ENCODE measurements at regions of chr6 and their contacts with region 1.

Region 1: DNA sequence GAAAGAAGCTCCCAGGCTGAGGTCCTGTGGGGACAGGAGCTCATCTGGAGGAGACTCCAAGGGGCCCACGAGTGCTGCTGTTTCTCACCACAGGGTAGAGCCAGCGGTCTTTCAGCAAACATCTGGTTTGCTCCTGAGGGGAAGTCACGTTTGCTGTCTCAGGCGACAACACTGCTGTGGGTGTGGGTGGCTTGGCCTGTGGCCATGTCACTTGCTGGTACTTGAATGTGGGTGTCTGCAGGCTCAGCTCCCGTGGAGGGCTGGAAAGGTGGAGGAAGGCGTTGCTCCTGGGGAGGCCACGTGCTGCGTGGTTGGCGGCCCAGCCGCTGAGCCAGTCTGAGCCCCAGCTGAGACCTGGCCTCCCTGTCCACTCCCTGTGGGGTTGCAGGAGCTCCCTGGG is 52.8 kb upstream of the MPC1 start:
- DNase-seq: peak; percentile 88 to 98 (median 97)
- H3K4me3 ChIP-seq: peak overlapping the region in 3 of 7 experiments; percentile 17 to 19 (median 19)
- H3K27ac ChIP-seq: no peak overlapping the region
- H3K4me1 ChIP-seq: peaks cover 12 to 65% (median 62%) of the 10 kb centered on the region in 4 experiments
- H3K27me3 ChIP-seq: peaks cover 0 to 2% (median 0%) of the 10 kb centered on the region in 5 experiments

Region 2: GRCh38 chr6:166387642-166388289 is 47.8 kb before region 1 on chr6:
- CTCF ChIA-PET with region 1: no interaction called
- POLR2A ChIA-PET with region 1: no interaction called
- DNase-seq: no peak
- H3K4me3 ChIP-seq: no peak overlapping the region
- H3K27ac ChIP-seq: no peak overlapping the region
- H3K4me1 ChIP-seq: peaks cover 0 to 9% (median under 1%) of the 10 kb centered on the region in 4 experiments
- H3K27me3 ChIP-seq: peaks cover 0 to 3% (median 3%) of the 10 kb centered on the region in 5 experiments

Region 3: DNA sequence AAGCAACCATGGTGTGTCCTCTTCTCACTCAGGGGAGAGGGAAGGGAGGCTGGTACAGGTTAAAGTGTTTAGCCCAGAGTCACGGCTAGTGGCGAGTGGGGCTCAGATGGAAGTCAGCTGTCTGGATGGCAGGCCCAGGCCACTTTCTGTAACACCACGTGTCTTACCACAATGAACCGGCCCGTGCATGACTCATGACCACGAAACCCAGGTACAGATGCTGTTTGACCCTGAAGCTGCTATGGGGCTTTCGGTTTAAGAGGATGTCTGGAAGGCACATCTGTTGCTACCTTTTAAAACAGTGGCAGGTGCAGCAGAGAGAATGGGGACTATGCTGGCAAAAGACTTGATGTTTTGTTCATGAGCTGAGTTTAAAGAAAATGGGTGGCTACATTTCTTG is 16.3 kb before region 1 on chr6:
- CTCF ChIA-PET with region 1: interaction called, 16 read pairs
- POLR2A ChIA-PET with region 1: no interaction called
- DNase-seq: peak; percentile 71 to 97 (median 94)
- H3K4me3 ChIP-seq: no peak overlapping the region
- H3K27ac ChIP-seq: no peak overlapping the region
- H3K4me1 ChIP-seq: peaks cover 0 to 42% (median 37%) of the 10 kb centered on the region in 4 experiments
- H3K27me3 ChIP-seq: no peaks in the 10 kb centered on the region

Region 4: GRCh38 chr6:166786704-166787293 is 351.2 kb after region 1 on chr6:
- CTCF ChIA-PET with region 1: interaction called, 10 read pairs
- POLR2A ChIA-PET with region 1: no interaction called
- DNase-seq: peak; percentile 63 to 78 (median 73)
- H3K4me3 ChIP-seq: no peak overlapping the region
- H3K27ac ChIP-seq: no peak overlapping the region
- H3K4me1 ChIP-seq: no peaks in the 10 kb centered on the region
- H3K27me3 ChIP-seq: peaks cover 0 to 2% (median 0%) of the 10 kb centered on the region in 5 experiments

Measured in common myeloid progenitor, CD34-positive (primary cell).